ENCODE measurements at regions of chr19 and their contacts with region 1.

Region 1: GRCh38 chr19:36214386-36215275 is at the starts of genes ZNF146 and ZNF565:
- DNase-seq: peak; percentile 99
- H3K4me3 Mint-ChIP-seq: no peak within 1 kb of the TSS
- H3K27ac Mint-ChIP-seq: no peak within 1 kb of the TSS
- H3K4me1 Mint-ChIP-seq: peaks cover 6% of the 10 kb centered on the region
- H3K27me3 Mint-ChIP-seq: no peaks in the 10 kb centered on the region
- CTCF ChIP-seq: no peak
- total RNA-seq, gene ZNF146: 102 and 132 TPM in 2 replicates
- total RNA-seq, gene ZNF565: 2.9 and 3.6 TPM in 2 replicates

Region 2: GRCh38 chr19:36054119-36054732 is 160.4 kb before region 1 on chr19 and contains the start of gene THAP8:
- CTCF ChIA-PET with region 1: no interaction called
- POLR2A ChIA-PET with region 1: interaction called, 12 read pairs
- intact Hi-C with region 1: no loop called
- DNase-seq: peak; percentile 99
- H3K4me3 Mint-ChIP-seq: peak within 1 kb of the TSS; percentile 86
- H3K27ac Mint-ChIP-seq: peak within 1 kb of the TSS; percentile 73
- H3K4me1 Mint-ChIP-seq: peaks cover 4% of the 10 kb centered on the region
- H3K27me3 Mint-ChIP-seq: no peaks in the 10 kb centered on the region
- CTCF ChIP-seq: peak; percentile 40
- total RNA-seq, gene THAP8: 4.0 and 4.7 TPM in 2 replicates

Region 3: DNA sequence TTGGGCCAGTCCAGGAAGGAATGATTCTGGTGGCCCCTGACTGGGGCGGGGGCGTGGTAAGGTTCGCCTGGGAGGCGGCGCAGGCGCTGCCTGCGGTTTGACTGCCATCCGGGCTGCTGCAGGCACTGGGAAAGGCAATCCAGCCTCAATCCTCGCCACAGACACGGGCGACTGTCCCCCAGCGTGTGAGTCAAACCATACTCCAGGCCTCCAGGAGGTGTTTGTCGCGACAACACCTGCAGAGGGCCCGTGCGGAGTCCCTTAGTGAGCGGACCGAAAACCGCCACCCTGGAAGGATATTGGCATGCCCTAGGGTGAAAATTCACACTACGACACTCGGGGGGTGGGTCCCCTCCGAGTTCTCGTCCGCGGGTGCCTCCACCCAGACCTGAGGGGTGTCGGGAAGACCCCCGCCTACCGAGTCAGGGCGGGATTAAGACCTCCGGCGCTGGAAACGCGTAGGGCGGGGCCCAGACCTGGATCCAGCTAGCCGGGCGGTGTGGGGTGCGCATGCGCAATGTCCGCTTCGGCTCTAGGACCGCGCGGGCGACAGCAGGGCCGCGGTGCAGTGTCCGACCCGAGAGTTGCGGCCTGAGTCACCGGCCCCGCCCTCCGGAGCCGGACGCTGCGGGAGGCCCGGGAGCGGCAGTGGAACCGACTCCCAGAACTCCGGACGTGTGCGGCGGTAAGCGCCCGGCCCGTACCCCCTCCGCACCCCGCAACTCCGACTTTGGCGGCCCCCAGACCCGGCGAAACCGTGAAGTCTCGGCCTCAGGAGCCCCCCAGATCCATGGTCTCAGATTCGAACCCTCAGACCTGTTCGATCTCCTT is 74.9 kb before region 1 on chr19 and contains the start of gene CAPNS1:
- CTCF ChIA-PET with region 1: no interaction called
- POLR2A ChIA-PET with region 1: interaction called, 15 read pairs
- intact Hi-C with region 1: no loop called
- DNase-seq: peak; percentile 97
- H3K4me3 Mint-ChIP-seq: peak within 1 kb of the TSS; percentile 97
- H3K27ac Mint-ChIP-seq: peak within 1 kb of the TSS; percentile 97
- H3K4me1 Mint-ChIP-seq: peaks cover 38% of the 10 kb centered on the region
- H3K27me3 Mint-ChIP-seq: no peaks in the 10 kb centered on the region
- CTCF ChIP-seq: no peak
- total RNA-seq, gene CAPNS1: 666 and 788 TPM in 2 replicates

Region 4: GRCh38 chr19:36236946-36237310 is 22.3 kb after region 1 on chr19:
- CTCF ChIA-PET with region 1: interaction called, 3 read pairs
- POLR2A ChIA-PET with region 1: interaction called, 13 read pairs
- intact Hi-C with region 1: no loop called
- DNase-seq: no peak
- H3K4me3 Mint-ChIP-seq: no peak overlapping the region
- H3K27ac Mint-ChIP-seq: no peak overlapping the region
- H3K4me1 Mint-ChIP-seq: no peaks in the 10 kb centered on the region
- H3K27me3 Mint-ChIP-seq: no peaks in the 10 kb centered on the region
- CTCF ChIP-seq: no peak

Region 5: GRCh38 chr19:36528194-36528920 is 313.7 kb after region 1 on chr19 and contains the start of gene ZNF260:
- CTCF ChIA-PET with region 1: no interaction called
- POLR2A ChIA-PET with region 1: interaction called, 14 read pairs
- intact Hi-C with region 1: no loop called
- DNase-seq: peak; percentile 95
- H3K4me3 Mint-ChIP-seq: peak within 1 kb of the TSS; percentile 96
- H3K27ac Mint-ChIP-seq: peak within 1 kb of the TSS; percentile 99
- H3K4me1 Mint-ChIP-seq: peaks cover 9% of the 10 kb centered on the region
- H3K27me3 Mint-ChIP-seq: no peaks in the 10 kb centered on the region
- CTCF ChIP-seq: no peak
- total RNA-seq, gene ZNF260: 13.8 and 14.5 TPM in 2 replicates

Region 6: GRCh38 chr19:36850559-36851442 is 636.2 kb after region 1 on chr19 and contains the start of gene ZNF345:
- CTCF ChIA-PET with region 1: no interaction called
- POLR2A ChIA-PET with region 1: interaction called, 3 read pairs
- intact Hi-C with region 1: loop called (anchors 10 kb)
- DNase-seq: peak; percentile 91
- H3K4me3 Mint-ChIP-seq: no peak within 1 kb of the TSS
- H3K27ac Mint-ChIP-seq: no peak within 1 kb of the TSS
- H3K4me1 Mint-ChIP-seq: no peaks in the 10 kb centered on the region
- H3K27me3 Mint-ChIP-seq: no peaks in the 10 kb centered on the region
- CTCF ChIP-seq: no peak
- total RNA-seq, gene ZNF345: 1.1 and 2.0 TPM in 2 replicates